Activated T-helper 1 cell treated with anti-CD3 and anti-CD28 coated beads, Interleukin-12 subunit alpha, Interleukin-12 subunit beta, Interleukin-2, Interleukin-4 antibody, amounts not matched to agents 30 ng/mL and 10 ng/mL and 1 ng/mL, durations not matched to agents 14 hours and 24 hours and 36 hours (primary cell): ENCODE measurements at regions of chr1 and their contacts with region 1.

Region 1: DNA sequence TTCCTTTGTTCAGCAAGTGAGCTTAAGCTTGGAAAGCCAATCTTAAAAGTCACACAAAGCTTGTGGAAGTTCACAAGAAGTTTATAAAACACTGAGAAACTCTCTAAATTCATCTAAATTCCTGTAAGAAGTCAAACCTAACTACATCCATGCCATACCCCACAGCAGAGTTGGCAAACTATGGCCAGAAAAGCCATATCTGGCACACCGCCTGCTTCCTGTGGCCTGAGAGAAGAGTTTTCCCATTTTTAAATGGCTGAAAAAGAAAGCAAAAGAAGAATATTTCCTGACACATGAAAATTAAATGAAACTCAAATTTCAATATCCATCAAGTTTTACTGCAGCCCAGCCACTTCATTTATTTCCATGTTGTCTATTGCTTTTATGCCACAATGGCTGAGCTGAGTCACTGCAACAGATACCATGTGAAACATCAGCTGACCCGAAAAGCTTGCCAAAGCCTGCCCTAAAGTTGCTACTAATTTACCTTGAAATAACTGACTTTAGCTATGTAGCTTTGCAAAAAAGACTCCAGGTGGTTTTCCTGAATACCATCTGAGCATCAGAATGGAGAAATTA is 237.1 kb downstream of the SLC45A1 start:
- DNase-seq: no peak
- H3K4me3 Mint-ChIP-seq: peak overlapping the region; percentile 17
- H3K27ac Mint-ChIP-seq: peak overlapping the region; percentile 84
- H3K4me1 Mint-ChIP-seq: peaks cover 55% of the 10 kb centered on the region
- H3K27me3 Mint-ChIP-seq: no peaks in the 10 kb centered on the region

Region 2: GRCh38 chr1:8252266-8252951 is 302.6 kb before region 1 on chr1:
- intact Hi-C with region 1: no loop called
- DNase-seq: no peak
- H3K4me3 Mint-ChIP-seq: no peak overlapping the region
- H3K27ac Mint-ChIP-seq: no peak overlapping the region
- H3K4me1 Mint-ChIP-seq: peaks cover 4% of the 10 kb centered on the region
- H3K27me3 Mint-ChIP-seq: peaks cover 3% of the 10 kb centered on the region

Region 3: GRCh38 chr1:8396786-8397406 is 158.1 kb before region 1 on chr1:
- intact Hi-C with region 1: loop called (anchors 1 kb)
- DNase-seq: no peak
- H3K4me3 Mint-ChIP-seq: no peak overlapping the region
- H3K27ac Mint-ChIP-seq: peak overlapping the region; percentile 71
- H3K4me1 Mint-ChIP-seq: peaks cover 63% of the 10 kb centered on the region
- H3K27me3 Mint-ChIP-seq: no peaks in the 10 kb centered on the region

Region 4: DNA sequence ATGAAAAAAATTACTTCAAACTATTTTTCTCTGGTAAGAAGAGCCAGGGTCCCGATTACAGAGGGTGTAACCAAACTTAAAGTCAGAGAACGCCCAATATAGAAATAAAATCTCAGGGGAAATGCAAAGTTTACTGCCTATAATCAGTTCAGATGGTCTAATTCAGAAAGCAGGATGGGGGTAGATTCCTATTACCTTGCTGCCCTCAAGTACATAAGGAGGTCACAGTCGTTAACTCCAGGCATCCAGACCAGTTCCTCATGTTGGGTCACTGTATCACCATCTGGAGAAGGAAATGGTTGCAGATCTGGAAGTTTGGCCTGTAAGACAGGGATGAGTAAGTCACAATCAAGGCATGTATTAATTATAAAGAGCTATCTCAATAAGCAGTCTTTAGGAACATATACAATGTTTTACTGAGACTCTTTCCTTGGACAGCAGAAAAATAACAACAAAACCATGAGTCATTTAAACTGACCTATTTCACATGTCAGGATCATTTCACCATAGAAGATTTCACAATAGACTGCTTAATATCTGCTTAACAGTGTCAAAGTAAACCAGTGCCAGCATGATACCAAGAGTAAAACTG is 57.7 kb before region 1 on chr1:
- intact Hi-C with region 1: loop called (anchors 1 kb)
- DNase-seq: no peak
- H3K4me3 Mint-ChIP-seq: no peak overlapping the region
- H3K27ac Mint-ChIP-seq: peak overlapping the region; percentile 67
- H3K4me1 Mint-ChIP-seq: peaks cover 34% of the 10 kb centered on the region
- H3K27me3 Mint-ChIP-seq: no peaks in the 10 kb centered on the region

Region 5: DNA sequence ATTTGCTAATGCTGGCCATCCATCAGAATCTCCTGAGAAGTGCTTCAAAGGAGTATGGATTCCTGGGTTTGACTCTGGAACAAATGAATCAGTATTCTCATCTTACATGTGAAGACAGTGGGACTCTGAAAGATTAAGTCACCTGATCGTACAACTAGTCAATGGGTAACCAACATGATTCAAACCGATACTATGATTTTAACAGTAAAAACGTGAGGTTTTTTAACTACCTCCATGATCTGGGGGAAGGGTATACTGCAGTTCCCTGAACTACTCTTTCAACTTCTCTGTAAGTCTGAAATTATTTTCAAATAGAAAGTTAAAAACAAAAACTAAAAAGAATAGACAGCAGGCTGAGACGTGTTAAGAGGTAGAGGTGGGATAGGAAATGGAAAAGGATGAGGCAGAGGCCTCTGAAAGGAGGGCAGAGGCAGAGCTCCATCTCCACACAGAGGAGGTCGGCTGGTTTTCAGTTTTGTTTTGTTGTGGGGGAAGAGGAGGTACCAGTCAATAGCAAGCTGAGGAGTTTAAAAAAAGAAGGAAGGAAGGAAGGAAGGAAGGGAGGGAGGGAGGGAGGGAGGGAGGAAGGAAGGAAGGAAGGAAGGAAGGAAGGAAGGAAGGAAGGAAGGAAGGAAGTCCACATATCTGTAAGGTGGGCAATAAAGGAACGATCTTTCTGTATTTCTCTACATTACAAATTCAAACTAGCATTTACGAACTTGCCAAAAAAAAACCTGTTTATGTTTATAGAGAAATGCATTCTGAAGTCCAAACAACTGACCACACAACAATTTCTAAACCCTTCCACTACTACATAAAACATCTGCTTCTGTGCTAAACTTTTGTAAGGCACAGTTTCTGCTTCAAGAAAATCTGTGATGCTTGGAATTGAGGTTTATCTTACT is 49.2 kb after region 1 on chr1:
- intact Hi-C with region 1: loop called (anchors 1 kb)
- DNase-seq: peak; percentile 34
- H3K4me3 Mint-ChIP-seq: peak overlapping the region; percentile 61
- H3K27ac Mint-ChIP-seq: peak overlapping the region; percentile 94
- H3K4me1 Mint-ChIP-seq: peaks cover 48% of the 10 kb centered on the region
- H3K27me3 Mint-ChIP-seq: no peaks in the 10 kb centered on the region

Region 6: DNA sequence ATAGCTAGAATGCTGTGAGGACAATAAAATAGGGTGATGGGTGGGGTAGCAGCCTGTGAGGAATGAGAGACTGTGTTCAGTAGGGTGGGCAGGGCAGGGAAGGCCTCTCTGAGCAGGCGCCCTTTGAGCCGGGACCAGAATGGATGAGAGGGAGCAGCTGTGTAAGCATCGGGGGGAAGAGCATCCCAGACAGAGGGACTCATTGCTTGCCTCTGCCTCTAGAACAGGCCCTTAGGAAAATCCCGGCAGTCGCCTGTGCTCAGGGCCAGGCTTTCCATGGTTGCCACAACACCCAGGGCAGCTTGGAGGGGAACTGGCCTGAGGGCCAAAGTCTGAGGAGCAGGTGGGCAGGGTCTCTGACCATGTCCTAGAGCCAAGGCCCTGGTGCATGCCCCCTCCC is 470.4 kb after region 1 on chr1:
- intact Hi-C with region 1: no loop called
- DNase-seq: no peak
- H3K4me3 Mint-ChIP-seq: no peak overlapping the region
- H3K27ac Mint-ChIP-seq: no peak overlapping the region
- H3K4me1 Mint-ChIP-seq: no peaks in the 10 kb centered on the region
- H3K27me3 Mint-ChIP-seq: peaks cover 14% of the 10 kb centered on the region